ENCODE measurements at regions of chr15 and their contacts with region 1.

Region 1: GRCh38 chr15:90320061-90320884 is 31.8 kb upstream of the ZNF774 start:
- DNase-seq: peak; percentile 77
- H3K4me3 Mint-ChIP-seq: no peak overlapping the region
- H3K27ac Mint-ChIP-seq: no peak overlapping the region
- H3K4me1 Mint-ChIP-seq: peaks cover 7% of the 10 kb centered on the region
- H3K27me3 Mint-ChIP-seq: no peaks in the 10 kb centered on the region

Region 2: GRCh38 chr15:90071208-90071807 is 249.0 kb before region 1 on chr15:
- CTCF ChIA-PET with region 1: no interaction called
- POLR2A ChIA-PET with region 1: no interaction called
- DNase-seq: peak; percentile 83
- H3K4me3 Mint-ChIP-seq: no peak overlapping the region
- H3K27ac Mint-ChIP-seq: no peak overlapping the region
- H3K4me1 Mint-ChIP-seq: peaks cover 10% of the 10 kb centered on the region
- H3K27me3 Mint-ChIP-seq: no peaks in the 10 kb centered on the region

Region 3: GRCh38 chr15:90114451-90114901 is 205.8 kb before region 1 on chr15:
- CTCF ChIA-PET with region 1: no interaction called
- POLR2A ChIA-PET with region 1: no interaction called
- DNase-seq: no peak
- H3K4me3 Mint-ChIP-seq: no peak overlapping the region
- H3K27ac Mint-ChIP-seq: no peak overlapping the region
- H3K4me1 Mint-ChIP-seq: no peaks in the 10 kb centered on the region
- H3K27me3 Mint-ChIP-seq: peaks cover 16% of the 10 kb centered on the region

Region 4: DNA sequence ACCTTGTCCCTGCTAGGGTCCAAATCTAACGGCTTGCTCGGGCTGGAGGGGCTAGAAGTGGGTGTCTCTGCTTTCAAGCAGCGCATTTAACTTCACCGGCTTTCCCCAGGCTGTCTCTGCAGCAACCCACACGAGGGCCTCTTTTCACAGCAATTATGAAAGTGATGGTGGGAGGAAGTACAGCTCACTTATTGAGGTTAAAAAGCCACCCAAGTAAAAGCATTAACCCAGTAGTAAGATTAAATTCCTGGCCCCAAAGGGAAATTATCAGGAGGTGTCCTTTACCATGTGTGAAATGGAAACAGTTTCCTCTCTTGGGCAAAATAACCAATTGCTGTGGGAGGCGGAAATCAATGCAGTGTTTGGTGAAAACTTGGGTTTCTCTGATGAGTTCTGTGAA is 13.7 kb before region 1 on chr15:
- CTCF ChIA-PET with region 1: interaction called, 23 read pairs
- POLR2A ChIA-PET with region 1: no interaction called
- DNase-seq: peak; percentile 49
- H3K4me3 Mint-ChIP-seq: peak overlapping the region; percentile 6
- H3K27ac Mint-ChIP-seq: peak overlapping the region; percentile 50
- H3K4me1 Mint-ChIP-seq: peaks cover 35% of the 10 kb centered on the region
- H3K27me3 Mint-ChIP-seq: peaks cover 7% of the 10 kb centered on the region

Region 5: GRCh38 chr15:90362936-90363212 is 42.6 kb after region 1 on chr15:
- CTCF ChIA-PET with region 1: interaction called, 11 read pairs
- POLR2A ChIA-PET with region 1: interaction called, 3 read pairs
- DNase-seq: no peak
- H3K4me3 Mint-ChIP-seq: no peak overlapping the region
- H3K27ac Mint-ChIP-seq: peak overlapping the region; percentile 58
- H3K4me1 Mint-ChIP-seq: peaks cover 37% of the 10 kb centered on the region
- H3K27me3 Mint-ChIP-seq: no peaks in the 10 kb centered on the region

Region 6: GRCh38 chr15:90463381-90463780 is 143.1 kb after region 1 on chr15:
- CTCF ChIA-PET with region 1: interaction called, 13 read pairs
- POLR2A ChIA-PET with region 1: interaction called, 3 read pairs
- DNase-seq: no peak
- H3K4me3 Mint-ChIP-seq: no peak overlapping the region
- H3K27ac Mint-ChIP-seq: no peak overlapping the region
- H3K4me1 Mint-ChIP-seq: peaks cover 7% of the 10 kb centered on the region
- H3K27me3 Mint-ChIP-seq: no peaks in the 10 kb centered on the region

Region 7: DNA sequence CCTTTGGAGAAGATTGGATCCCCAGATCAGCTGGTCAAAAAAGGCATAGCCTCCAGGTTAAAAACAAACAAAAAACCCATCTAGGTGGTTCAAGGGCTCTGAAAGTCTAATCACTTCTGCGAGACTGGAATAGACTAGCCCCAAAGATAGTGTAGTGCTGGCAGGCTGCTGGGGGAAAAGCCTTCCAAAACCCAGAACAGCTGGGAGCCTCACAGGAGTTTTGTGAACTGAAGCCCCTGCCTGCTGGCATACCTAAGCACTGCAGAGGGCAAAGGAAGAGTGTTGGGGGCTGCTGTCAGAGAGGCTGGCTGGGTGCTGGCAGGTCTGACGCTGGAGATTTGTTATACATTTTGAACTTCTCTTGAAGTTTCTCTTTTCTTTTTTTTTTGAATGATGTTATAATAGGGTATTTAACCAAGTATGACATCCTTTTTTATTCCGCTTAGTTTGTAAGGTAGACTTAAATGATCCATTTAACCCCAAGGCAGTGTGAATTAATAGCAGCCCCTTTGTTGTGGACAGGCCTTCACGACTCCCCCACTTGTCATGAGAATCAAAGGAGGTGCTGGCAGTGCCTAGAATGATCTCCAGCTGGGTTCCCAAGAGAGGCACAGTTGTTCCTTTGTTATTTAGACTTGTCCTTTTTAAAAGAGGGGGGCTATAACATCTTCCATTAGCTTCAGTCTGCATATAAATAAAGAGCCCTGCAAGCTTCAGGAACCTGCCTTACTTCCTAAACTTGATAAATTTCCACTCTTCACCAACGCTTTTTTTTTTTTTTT is 263.4 kb after region 1 on chr15:
- CTCF ChIA-PET with region 1: interaction called, 10 read pairs
- POLR2A ChIA-PET with region 1: no interaction called
- DNase-seq: no peak
- H3K4me3 Mint-ChIP-seq: no peak overlapping the region
- H3K27ac Mint-ChIP-seq: no peak overlapping the region
- H3K4me1 Mint-ChIP-seq: peaks cover 46% of the 10 kb centered on the region
- H3K27me3 Mint-ChIP-seq: no peaks in the 10 kb centered on the region

Measured in activated CD4-positive, alpha-beta memory T cell treated with anti-CD3 and anti-CD28 coated beads, Interleukin-2, amount 10 ng/mL, durations not matched to agents 7 days and 5 days (primary cell).